ENCODE measurements at regions of chr9 and their contacts with region 1.

Region 1: GRCh38 chr9:114681594-114682332 is at the start of gene TEX48:
- DNase-seq: peak; percentile 79 to 84 (median 81)
- H3K4me3 ChIP-seq: peak within 1 kb of the TSS in 1 of 2 donors; percentile 11
- H3K4me3 Mint-ChIP-seq: peak within 1 kb of the TSS; percentile 1 to 80 (median 62)
- H3K27ac ChIP-seq: peak within 1 kb of the TSS; percentile 23
- H3K27ac Mint-ChIP-seq: peak within 1 kb of the TSS; percentile 75 to 96 (median 92)
- H3K4me1 ChIP-seq: peaks cover 22% of the 10 kb centered on the region
- H3K4me1 Mint-ChIP-seq: peaks cover 15 to 18% (median 17%) of the 10 kb centered on the region in 4 donors
- H3K27me3 ChIP-seq: no peaks in the 10 kb centered on the region
- H3K27me3 Mint-ChIP-seq: peaks cover 2 to 3% of the 10 kb centered on the region in 2 donors
- total RNA-seq, gene TEX48: not detected

Region 2: DNA sequence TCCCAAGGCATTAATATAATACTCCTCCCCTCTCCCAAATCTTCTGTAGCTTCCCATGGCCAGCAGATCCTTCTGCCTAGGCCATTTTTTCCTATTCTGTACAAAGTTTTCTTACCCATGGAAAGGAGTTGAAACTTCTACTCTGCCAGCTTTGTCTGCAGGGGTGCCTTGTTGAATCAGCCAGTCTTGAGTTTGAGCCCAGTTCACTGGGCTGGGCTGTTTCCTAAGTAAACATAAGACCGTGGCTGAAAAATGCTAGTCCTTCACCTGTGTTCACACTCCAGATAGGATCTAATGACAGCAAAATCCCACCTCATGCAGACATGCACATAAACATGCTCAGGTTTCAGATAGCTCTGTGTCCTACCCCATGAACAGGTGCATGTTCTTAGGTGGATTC is 10.2 kb before region 1 on chr9:
- CTCF ChIA-PET with region 1: interaction called, 22 read pairs
- POLR2A ChIA-PET with region 1: no interaction called
- intact Hi-C with region 1: no loop called
- DNase-seq: no peak
- H3K4me3 ChIP-seq: no peak overlapping the region
- H3K4me3 Mint-ChIP-seq: no peak overlapping the region
- H3K27ac ChIP-seq: no peak overlapping the region
- H3K27ac Mint-ChIP-seq: peak overlapping the region in 1 of 7 donors; percentile 12
- H3K4me1 ChIP-seq: no peaks in the 10 kb centered on the region
- H3K4me1 Mint-ChIP-seq: peaks cover 0 to 1% (median 0%) of the 10 kb centered on the region in 4 donors
- H3K27me3 ChIP-seq: no peaks in the 10 kb centered on the region
- H3K27me3 Mint-ChIP-seq: no peaks in the 10 kb centered on the region

Region 3: GRCh38 chr9:114706711-114707110 is 24.9 kb after region 1 on chr9:
- CTCF ChIA-PET with region 1: interaction called, 12 read pairs
- POLR2A ChIA-PET with region 1: no interaction called
- intact Hi-C with region 1: no loop called
- DNase-seq: no peak
- H3K4me3 ChIP-seq: no peak overlapping the region
- H3K4me3 Mint-ChIP-seq: peak overlapping the region in 1 of 8 donors; percentile 18
- H3K27ac ChIP-seq: no peak overlapping the region
- H3K27ac Mint-ChIP-seq: peak overlapping the region in 2 of 7 donors; percentile 43 to 49
- H3K4me1 ChIP-seq: peaks cover 8% of the 10 kb centered on the region
- H3K4me1 Mint-ChIP-seq: peaks cover 15 to 25% (median 17%) of the 10 kb centered on the region in 4 donors
- H3K27me3 ChIP-seq: no peaks in the 10 kb centered on the region
- H3K27me3 Mint-ChIP-seq: no peaks in the 10 kb centered on the region

Region 4: GRCh38 chr9:114738581-114739316 is 57.0 kb after region 1 on chr9:
- CTCF ChIA-PET with region 1: interaction called, 115 read pairs
- POLR2A ChIA-PET with region 1: interaction called, 4 read pairs
- intact Hi-C with region 1: loop called (anchors 1 kb)
- DNase-seq: peak; percentile 73 to 75 (median 74)
- H3K4me3 ChIP-seq: no peak overlapping the region
- H3K4me3 Mint-ChIP-seq: peak overlapping the region in 3 of 8 donors; percentile 16 to 64 (median 36)
- H3K27ac ChIP-seq: no peak overlapping the region
- H3K27ac Mint-ChIP-seq: peak overlapping the region; percentile 67 to 95 (median 91)
- H3K4me1 ChIP-seq: peaks cover 44% of the 10 kb centered on the region
- H3K4me1 Mint-ChIP-seq: peaks cover 34 to 54% (median 43%) of the 10 kb centered on the region in 4 donors
- H3K27me3 ChIP-seq: no peaks in the 10 kb centered on the region
- H3K27me3 Mint-ChIP-seq: no peaks in the 10 kb centered on the region

Region 5: GRCh38 chr9:114969269-114969668 is 287.5 kb after region 1 on chr9:
- CTCF ChIA-PET with region 1: no interaction called
- POLR2A ChIA-PET with region 1: no interaction called
- intact Hi-C with region 1: no loop called
- DNase-seq: no peak
- H3K4me3 ChIP-seq: no peak overlapping the region
- H3K4me3 Mint-ChIP-seq: no peak overlapping the region
- H3K27ac ChIP-seq: no peak overlapping the region
- H3K27ac Mint-ChIP-seq: no peak overlapping the region
- H3K4me1 ChIP-seq: peaks cover 16% of the 10 kb centered on the region
- H3K4me1 Mint-ChIP-seq: peaks cover 10 to 23% (median 18%) of the 10 kb centered on the region in 4 donors
- H3K27me3 ChIP-seq: no peaks in the 10 kb centered on the region
- H3K27me3 Mint-ChIP-seq: no peaks in the 10 kb centered on the region

Region 6: GRCh38 chr9:115013998-115014397 is 332.2 kb after region 1 on chr9:
- CTCF ChIA-PET with region 1: interaction called, 233 read pairs
- POLR2A ChIA-PET with region 1: no interaction called
- intact Hi-C with region 1: loop called (anchors 1 kb)
- DNase-seq: peak; percentile 78 to 79 (median 79)
- H3K4me3 ChIP-seq: no peak overlapping the region
- H3K4me3 Mint-ChIP-seq: no peak overlapping the region
- H3K27ac ChIP-seq: no peak overlapping the region
- H3K27ac Mint-ChIP-seq: peak overlapping the region in 1 of 7 donors; percentile 69
- H3K4me1 ChIP-seq: peaks cover 12% of the 10 kb centered on the region
- H3K4me1 Mint-ChIP-seq: peaks cover 19 to 21% (median 20%) of the 10 kb centered on the region in 4 donors
- H3K27me3 ChIP-seq: no peaks in the 10 kb centered on the region
- H3K27me3 Mint-ChIP-seq: peaks cover 0 to 1% of the 10 kb centered on the region in 2 donors